ENCODE measurements at regions of chrX and their contacts with region 1.

Region 1: GRCh38 chrX:154443992-154444754 is at the start of gene FAM50A:
- DNase-seq: peak; percentile 65 to 96 (median 76)

Region 2: DNA sequence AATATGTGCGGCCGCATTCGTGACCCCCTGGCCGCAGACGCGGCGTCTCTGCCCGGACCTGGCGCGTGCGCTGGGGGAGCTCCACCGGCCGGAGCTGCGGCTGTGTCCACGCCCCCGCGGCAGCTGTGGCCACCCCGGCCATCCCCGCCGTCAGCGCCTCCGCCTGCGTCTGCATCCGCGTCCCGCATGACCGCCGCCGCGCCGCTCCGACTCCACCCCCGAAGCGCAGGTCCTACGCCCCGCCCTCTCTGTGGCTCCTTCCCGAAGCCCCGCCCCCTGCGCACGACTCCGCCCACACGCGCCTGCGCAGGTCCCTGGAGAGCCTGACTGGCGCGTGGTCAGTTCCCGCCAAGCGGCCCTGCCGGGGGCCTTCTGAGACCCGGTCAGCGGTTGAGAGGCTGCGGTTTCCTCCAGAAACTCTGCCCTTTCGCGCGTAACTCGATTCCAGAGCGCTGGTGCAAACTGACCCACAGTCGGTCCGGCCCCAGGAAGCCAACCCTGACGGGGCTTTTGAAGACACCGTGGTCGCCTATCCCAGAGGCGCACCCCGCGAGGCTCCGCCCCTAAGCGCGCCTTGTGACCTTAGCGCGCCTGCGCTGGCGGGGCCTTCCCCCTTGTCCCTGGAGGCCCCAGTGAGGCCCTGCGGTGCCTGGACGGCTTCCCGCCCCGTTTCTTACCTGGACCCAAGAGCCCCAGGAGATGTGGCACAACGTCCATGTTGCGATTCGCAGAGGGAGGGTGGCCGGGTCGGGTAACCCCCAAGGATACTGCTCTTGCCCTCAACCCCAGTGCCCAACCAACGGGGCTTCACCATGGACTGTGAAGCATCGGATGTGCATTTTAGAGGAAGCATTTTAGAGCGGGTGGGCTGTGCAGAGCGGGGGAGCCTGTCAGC is 34.8 kb after region 1 on chrX and contains the start of gene LAGE3:
- intact Hi-C with region 1: loop called (anchors 5 kb)
- DNase-seq: peak; percentile 86 to 99 (median 91)

Region 3: GRCh38 chrX:154762523-154763289 is 318.5 kb after region 1 on chrX and contains the start of gene DKC1:
- intact Hi-C with region 1: no loop called
- DNase-seq: peak; percentile 88 to 99 (median 92)

Measured in posterior cingulate gyrus (tissue), 11 donors.